PC-3 (cell line): ENCODE measurements at regions of chr14 and their contacts with region 1.

Region 1: GRCh38 chr14:31937721-31938346 is 139.3 kb upstream of the ARHGAP5 start:
- DNase-seq: peak; percentile 94
- ATAC-seq: peak; percentile 92
- H3K4me3 ChIP-seq: no peak overlapping the region
- H3K27ac ChIP-seq: peak overlapping the region; percentile 75
- H3K4me1 ChIP-seq: peaks cover 40% of the 10 kb centered on the region
- H3K27me3 ChIP-seq: no peaks in the 10 kb centered on the region
- CTCF ChIP-seq: no peak

Region 2: GRCh38 chr14:31992011-31992447 is 54.2 kb after region 1 on chr14:
- CTCF ChIA-PET with region 1: interaction called, 3 read pairs
- POLR2A ChIA-PET with region 1: no interaction called
- intact Hi-C with region 1: loop called (anchors 1 kb)
- DNase-seq: peak; percentile 92
- ATAC-seq: peak; percentile 88
- H3K4me3 ChIP-seq: no peak overlapping the region
- H3K27ac ChIP-seq: peak overlapping the region; percentile 75
- H3K4me1 ChIP-seq: peaks cover 33% of the 10 kb centered on the region
- H3K27me3 ChIP-seq: no peaks in the 10 kb centered on the region
- CTCF ChIP-seq: no peak

Region 3: GRCh38 chr14:32009976-32010863 is 72.4 kb after region 1 on chr14:
- CTCF ChIA-PET with region 1: no interaction called
- POLR2A ChIA-PET with region 1: no interaction called
- intact Hi-C with region 1: loop called (anchors 1 kb)
- DNase-seq: peak; percentile 95
- ATAC-seq: peak; percentile 71
- H3K4me3 ChIP-seq: no peak overlapping the region
- H3K27ac ChIP-seq: peak overlapping the region; percentile 88
- H3K4me1 ChIP-seq: peaks cover 61% of the 10 kb centered on the region
- H3K27me3 ChIP-seq: no peaks in the 10 kb centered on the region
- CTCF ChIP-seq: no peak

Region 4: DNA sequence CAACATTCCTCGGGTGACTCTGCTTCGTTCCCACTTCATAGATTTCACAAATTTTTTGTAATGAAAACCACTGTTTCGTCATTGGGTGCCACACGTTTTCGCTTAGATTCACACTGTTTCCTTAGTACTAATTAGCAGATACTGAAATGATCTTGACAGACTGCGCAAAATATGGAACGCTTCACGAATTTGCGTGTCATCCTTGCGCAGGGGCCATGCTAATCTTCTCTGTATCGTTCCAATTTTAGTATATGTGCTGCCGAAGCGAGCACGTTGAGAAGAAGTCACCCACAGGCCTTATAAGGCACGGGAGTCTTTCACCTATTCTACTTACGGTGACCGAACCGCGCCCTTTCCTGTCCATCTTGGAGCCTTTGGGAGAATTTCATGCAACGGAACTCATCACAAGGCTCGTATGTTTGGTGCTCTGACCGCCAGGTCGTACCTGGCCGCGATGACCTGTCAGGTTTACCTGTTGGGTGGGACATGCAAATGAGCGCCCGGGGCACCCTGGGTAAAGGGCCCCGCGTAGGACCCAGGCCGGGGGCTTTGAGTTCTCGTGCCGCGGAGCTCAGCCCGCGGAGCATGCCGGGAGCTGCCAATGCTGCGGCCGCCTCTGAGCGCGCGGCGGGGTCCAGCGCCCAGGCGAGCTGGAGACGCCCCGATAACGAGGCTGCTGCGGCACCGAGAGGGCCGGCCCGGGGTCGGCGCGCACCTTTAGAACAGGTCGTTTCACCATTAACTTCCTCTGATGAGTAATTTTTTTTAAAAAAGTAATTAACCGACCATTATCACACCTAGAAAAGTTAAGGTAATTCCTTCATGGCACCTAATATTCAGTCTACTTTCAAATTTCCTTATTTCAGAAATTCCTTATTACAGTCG is 265.4 kb after region 1 on chr14 and contains the start of gene RNU6-8:
- CTCF ChIA-PET with region 1: no interaction called
- POLR2A ChIA-PET with region 1: no interaction called
- intact Hi-C with region 1: loop called (anchors 1 kb)
- DNase-seq: peak; percentile 92
- ATAC-seq: peak; percentile 68
- H3K4me3 ChIP-seq: peak within 1 kb of the TSS; percentile 87
- H3K27ac ChIP-seq: peak within 1 kb of the TSS; percentile 65
- H3K4me1 ChIP-seq: peaks cover 21% of the 10 kb centered on the region; the same call in 1 of the 2 replicates
- H3K27me3 ChIP-seq: no peaks in the 10 kb centered on the region
- CTCF ChIP-seq: no peak
- total RNA-seq, gene RNU6-8: not detected in 2 replicates

Region 5: GRCh38 chr14:32230695-32231280 is 293.0 kb after region 1 on chr14:
- CTCF ChIA-PET with region 1: no interaction called
- POLR2A ChIA-PET with region 1: no interaction called
- intact Hi-C with region 1: loop called (anchors 5 kb)
- DNase-seq: peak; percentile 73
- ATAC-seq: peak; percentile 62
- H3K4me3 ChIP-seq: peak overlapping the region; percentile 26; the same call in 1 of the 2 replicates
- H3K27ac ChIP-seq: peak overlapping the region; percentile 77
- H3K4me1 ChIP-seq: peaks cover 50% of the 10 kb centered on the region
- H3K27me3 ChIP-seq: no peaks in the 10 kb centered on the region
- CTCF ChIP-seq: no peak

Region 6: GRCh38 chr14:32244404-32244803 is 306.6 kb after region 1 on chr14:
- CTCF ChIA-PET with region 1: no interaction called
- POLR2A ChIA-PET with region 1: no interaction called
- intact Hi-C with region 1: loop called (anchors 1 kb)
- DNase-seq: peak; percentile 44
- ATAC-seq: peak; percentile 88
- H3K4me3 ChIP-seq: no peak overlapping the region
- H3K27ac ChIP-seq: no peak overlapping the region
- H3K4me1 ChIP-seq: no peaks in the 10 kb centered on the region
- H3K27me3 ChIP-seq: no peaks in the 10 kb centered on the region
- CTCF ChIP-seq: peak; percentile 51

Region 7: GRCh38 chr14:32560209-32560857 is 622.5 kb after region 1 on chr14:
- CTCF ChIA-PET with region 1: interaction called, 4 read pairs
- POLR2A ChIA-PET with region 1: no interaction called
- intact Hi-C with region 1: loop called (anchors 5 kb)
- DNase-seq: peak; percentile 84
- ATAC-seq: peak; percentile 61
- H3K4me3 ChIP-seq: no peak overlapping the region
- H3K27ac ChIP-seq: no peak overlapping the region
- H3K4me1 ChIP-seq: peaks cover 30% of the 10 kb centered on the region
- H3K27me3 ChIP-seq: no peaks in the 10 kb centered on the region
- CTCF ChIP-seq: peak; percentile 97